T-cell (primary cell): ENCODE measurements at regions of chr1 and their contacts with region 1.

Region 1: DNA sequence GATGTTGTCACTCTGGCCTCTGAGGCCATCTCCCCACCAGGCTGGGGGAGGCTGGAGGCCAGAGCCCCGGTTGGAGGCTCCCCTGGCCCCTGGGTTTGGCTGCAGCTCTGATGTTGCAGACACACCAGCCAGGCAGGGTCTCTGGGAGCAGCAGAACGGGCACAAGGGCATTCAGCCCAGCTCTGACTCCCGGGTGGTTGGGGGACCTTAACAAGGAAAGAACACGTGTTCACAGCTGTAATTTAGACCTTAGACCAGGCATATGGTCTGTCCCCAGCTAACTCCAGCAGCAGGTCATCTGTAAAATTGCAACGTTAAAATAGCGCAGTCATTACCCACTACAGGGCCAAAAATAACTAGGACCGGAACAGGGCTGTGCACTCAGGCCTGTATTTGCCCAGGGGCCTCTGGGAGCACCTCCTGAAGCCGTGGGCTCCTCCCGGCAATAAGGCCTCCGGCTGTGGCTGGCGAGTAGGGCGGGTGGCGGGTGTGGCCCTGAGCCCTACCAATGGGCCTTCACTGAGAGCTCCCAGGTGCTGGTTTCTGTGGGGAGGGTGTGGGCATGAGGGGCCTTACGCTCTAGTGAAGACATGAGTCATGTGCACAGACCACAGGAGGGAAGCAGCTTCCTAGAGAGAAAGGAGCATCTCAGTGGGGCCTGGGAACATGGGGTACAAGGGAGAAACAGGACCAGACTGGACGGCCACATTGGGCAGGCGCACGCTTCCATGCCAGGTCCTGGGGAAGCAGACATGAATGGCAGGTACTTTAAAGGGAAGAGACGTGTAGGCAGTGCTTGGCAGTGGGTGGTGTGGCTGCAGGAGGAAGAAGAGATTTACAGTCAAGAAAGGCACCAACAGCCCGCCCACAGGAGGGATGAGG is 6.1 kb downstream of the LDLRAP1 start:
- DNase-seq: peak; percentile 43 to 73 (median 59)
- ATAC-seq: peak; percentile 95 to 99 (median 96)
- H3K4me3 ChIP-seq: peak overlapping the region; percentile 34 to 39
- H3K4me3 Mint-ChIP-seq: peak overlapping the region; percentile 57 to 79 (median 77)
- H3K27ac ChIP-seq: peak overlapping the region; percentile 69
- H3K27ac Mint-ChIP-seq: peak overlapping the region; percentile 97 to 98
- H3K4me1 ChIP-seq: peaks cover 76 to 99% of the 10 kb centered on the region in 2 experiments
- H3K4me1 Mint-ChIP-seq: peaks cover 93 to 95% (median 93%) of the 10 kb centered on the region in 3 donors
- H3K27me3 ChIP-seq: no peaks in the 10 kb centered on the region
- H3K27me3 Mint-ChIP-seq: no peaks in the 10 kb centered on the region

Region 2: GRCh38 chr1:25492323-25492722 is 57.2 kb before region 1 on chr1:
- CTCF ChIA-PET with region 1: no interaction called
- POLR2A ChIA-PET with region 1: no interaction called
- DNase-seq: no peak
- ATAC-seq: no peak
- H3K4me3 ChIP-seq: no peak overlapping the region
- H3K4me3 Mint-ChIP-seq: no peak overlapping the region
- H3K27ac ChIP-seq: no peak overlapping the region
- H3K27ac Mint-ChIP-seq: peak overlapping the region; percentile 25 to 39
- H3K4me1 ChIP-seq: no peaks in the 10 kb centered on the region
- H3K4me1 Mint-ChIP-seq: peaks cover 5 to 10% (median 7%) of the 10 kb centered on the region in 3 donors
- H3K27me3 ChIP-seq: no peaks in the 10 kb centered on the region
- H3K27me3 Mint-ChIP-seq: no peaks in the 10 kb centered on the region

Region 3: GRCh38 chr1:25566730-25567341 is 17.3 kb after region 1 on chr1:
- CTCF ChIA-PET with region 1: interaction called in 1 of 2 experiments, 10 read pairs
- POLR2A ChIA-PET with region 1: interaction called in 1 of 2 experiments, 3 read pairs
- DNase-seq: peak in 26 of 35 experiments; percentile 29 to 72 (median 45)
- ATAC-seq: peak in 1 of 4 experiments; percentile 33
- H3K4me3 ChIP-seq: peak overlapping the region in 1 of 2 donors; percentile 0
- H3K4me3 Mint-ChIP-seq: peak overlapping the region; percentile 95 to 99 (median 98)
- H3K27ac ChIP-seq: no peak overlapping the region
- H3K27ac Mint-ChIP-seq: peak overlapping the region; percentile 91 to 97
- H3K4me1 ChIP-seq: peaks cover 31 to 91% of the 10 kb centered on the region in 2 experiments
- H3K4me1 Mint-ChIP-seq: peaks cover 76 to 91% (median 80%) of the 10 kb centered on the region in 3 donors
- H3K27me3 ChIP-seq: no peaks in the 10 kb centered on the region
- H3K27me3 Mint-ChIP-seq: no peaks in the 10 kb centered on the region

Region 4: DNA sequence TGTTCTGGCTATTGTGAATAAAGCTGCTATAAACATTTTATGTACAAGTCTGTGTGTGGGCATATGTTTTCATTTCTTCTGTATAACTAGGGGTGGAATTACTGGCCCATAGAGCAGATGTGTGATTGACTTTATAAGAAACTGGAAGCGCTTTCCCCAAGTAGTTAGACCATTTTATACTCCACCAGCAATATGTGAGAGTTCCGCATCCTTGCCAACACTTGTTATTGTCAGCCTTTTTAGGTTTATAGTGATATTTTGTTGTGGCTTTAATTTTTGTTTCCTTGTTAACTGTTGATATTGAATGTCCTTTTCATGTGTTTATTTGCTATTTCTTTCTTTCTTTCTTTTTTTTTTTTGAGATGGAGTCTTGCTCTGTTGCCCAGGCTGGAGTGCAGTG is 76.5 kb after region 1 on chr1:
- CTCF ChIA-PET with region 1: no interaction called
- POLR2A ChIA-PET with region 1: no interaction called
- DNase-seq: no peak
- ATAC-seq: no peak
- H3K4me3 ChIP-seq: no peak overlapping the region
- H3K4me3 Mint-ChIP-seq: peak overlapping the region in 1 of 3 donors; percentile 92
- H3K27ac ChIP-seq: no peak overlapping the region
- H3K27ac Mint-ChIP-seq: peak overlapping the region; percentile 77 to 81
- H3K4me1 ChIP-seq: peaks cover 40 to 49% of the 10 kb centered on the region in 2 experiments
- H3K4me1 Mint-ChIP-seq: peaks cover 89 to 94% (median 90%) of the 10 kb centered on the region in 3 donors
- H3K27me3 ChIP-seq: no peaks in the 10 kb centered on the region
- H3K27me3 Mint-ChIP-seq: no peaks in the 10 kb centered on the region

Region 5: DNA sequence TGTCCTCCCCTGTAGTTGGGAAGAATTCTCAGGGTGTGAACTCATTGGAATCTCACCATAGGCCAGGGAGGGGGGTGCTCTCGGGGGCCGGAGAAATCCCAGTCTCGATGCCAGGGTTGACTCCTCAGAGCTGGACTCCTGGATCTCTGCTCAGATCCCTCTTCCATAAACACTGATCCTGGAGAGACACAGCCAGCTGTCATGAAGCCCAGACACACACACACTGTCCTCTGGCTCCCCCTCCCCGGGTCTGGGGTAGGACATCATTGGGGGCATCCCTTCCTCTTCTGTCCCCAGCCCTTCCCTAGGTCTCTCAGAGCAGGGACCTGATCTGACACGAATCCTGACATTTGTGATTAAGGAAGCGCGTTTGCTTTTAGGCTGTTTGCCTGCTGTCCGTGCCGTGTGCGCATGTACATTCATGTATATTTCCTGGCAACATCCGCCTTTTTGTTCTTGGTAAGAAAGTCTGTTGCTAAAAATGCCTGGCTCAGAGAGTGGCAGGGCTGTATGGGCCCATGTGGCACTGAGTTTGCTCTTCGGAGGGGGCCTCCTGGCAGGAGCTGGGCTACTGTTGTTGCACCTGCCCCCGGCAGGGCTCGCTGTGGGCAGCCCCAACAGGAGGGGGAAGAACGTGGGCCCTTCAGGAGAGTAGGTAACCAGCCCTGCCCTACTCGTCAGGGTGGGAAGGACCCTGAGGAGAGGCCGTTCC is 205.1 kb after region 1 on chr1:
- CTCF ChIA-PET with region 1: no interaction called
- POLR2A ChIA-PET with region 1: interaction called in 1 of 2 experiments, 11 read pairs
- DNase-seq: peak in 32 of 35 experiments; percentile 2 to 70 (median 48)
- ATAC-seq: peak; percentile 72 to 94 (median 76)
- H3K4me3 ChIP-seq: peak overlapping the region in 1 of 2 donors; percentile 2
- H3K4me3 Mint-ChIP-seq: peak overlapping the region; percentile 9 to 72 (median 39)
- H3K27ac ChIP-seq: peak overlapping the region; percentile 39
- H3K27ac Mint-ChIP-seq: peak overlapping the region; percentile 93 to 94
- H3K4me1 ChIP-seq: peaks cover 19 to 46% of the 10 kb centered on the region in 2 experiments
- H3K4me1 Mint-ChIP-seq: peaks cover 44 to 68% (median 47%) of the 10 kb centered on the region in 3 donors
- H3K27me3 ChIP-seq: no peaks in the 10 kb centered on the region
- H3K27me3 Mint-ChIP-seq: no peaks in the 10 kb centered on the region

Region 6: GRCh38 chr1:25858906-25859789 is 309.6 kb after region 1 on chr1 and contains the start of gene AUNIP:
- CTCF ChIA-PET with region 1: no interaction called
- POLR2A ChIA-PET with region 1: no interaction called
- DNase-seq: peak; percentile 78 to 95 (median 86)
- ATAC-seq: peak; percentile 98 to 100 (median 100)
- H3K4me3 ChIP-seq: peak within 1 kb of the TSS; percentile 64 to 86
- H3K4me3 Mint-ChIP-seq: peak within 1 kb of the TSS; percentile 88 to 91 (median 89)
- H3K27ac ChIP-seq: peak within 1 kb of the TSS; percentile 74
- H3K27ac Mint-ChIP-seq: peak within 1 kb of the TSS; percentile 85 to 90
- H3K4me1 ChIP-seq: peaks cover 2 to 22% of the 10 kb centered on the region in 2 experiments
- H3K4me1 Mint-ChIP-seq: peaks cover 20 to 21% (median 21%) of the 10 kb centered on the region in 3 donors
- H3K27me3 ChIP-seq: peaks cover 0 to 5% of the 10 kb centered on the region in 2 experiments
- H3K27me3 Mint-ChIP-seq: no peaks in the 10 kb centered on the region
- total RNA-seq, gene AUNIP: 0.20 to 0.35 TPM in 2 of 5 donors, not detected in the others